ENCODE measurements at regions of chr17 and their contacts with region 1.

Region 1: GRCh38 chr17:9575381-9576101 is at the start of gene STX8:
- DNase-seq: peak; percentile 94
- H3K4me3 ChIP-seq: peak within 1 kb of the TSS; percentile 67 to 75 (median 70)
- H3K27ac ChIP-seq: peak within 1 kb of the TSS; percentile 66 to 73 (median 68)
- H3K4me1 ChIP-seq: peaks cover 0 to 26% (median 18%) of the 10 kb centered on the region in 4 donors
- H3K27me3 ChIP-seq: no peaks in the 10 kb centered on the region
- CTCF ChIP-seq: no peak
- EP300 ChIP-seq: peak in 1 of 4 donors; percentile 29
- POLR2A ChIP-seq: peak in 1 of 2 donors; percentile 14
- total RNA-seq, gene STX8: 56.6 to 104 (median 83.4) TPM

Region 2: GRCh38 chr17:9636501-9636900 is 61.0 kb after region 1 on chr17:
- intact Hi-C with region 1: no loop called
- DNase-seq: no peak
- H3K4me3 ChIP-seq: no peak overlapping the region
- H3K27ac ChIP-seq: no peak overlapping the region
- H3K4me1 ChIP-seq: no peaks in the 10 kb centered on the region
- H3K27me3 ChIP-seq: peaks cover 0 to 6% (median 0%) of the 10 kb centered on the region in 3 donors
- CTCF ChIP-seq: no peak
- EP300 ChIP-seq: no peak
- POLR2A ChIP-seq: no peak

Region 3: DNA sequence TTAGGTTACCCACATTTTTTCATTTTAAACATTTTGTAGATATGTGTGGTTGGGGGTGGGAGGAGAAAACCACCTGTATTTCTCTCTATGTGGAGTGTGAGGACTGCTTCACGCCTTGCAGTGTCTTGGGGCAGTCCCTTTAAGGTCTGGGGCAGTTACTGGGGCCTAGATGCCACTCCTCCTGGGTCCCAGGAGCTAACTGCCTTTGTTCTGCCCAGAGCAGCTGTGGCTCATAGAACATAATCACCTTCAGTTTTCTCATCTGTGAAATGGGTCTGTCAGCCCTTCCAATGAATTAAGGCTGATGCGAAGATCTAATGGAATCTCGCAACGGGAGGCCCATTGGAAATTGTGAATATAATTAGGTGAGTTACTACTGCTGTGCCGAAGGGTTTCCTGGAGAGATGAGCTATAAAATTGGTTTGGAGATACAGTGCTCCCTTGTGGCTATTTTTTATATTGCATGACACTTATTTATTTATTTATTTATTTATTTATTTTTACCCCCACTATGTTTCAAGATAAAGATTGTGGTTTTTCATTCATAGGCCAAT is 192.9 kb after region 1 on chr17:
- intact Hi-C with region 1: loop called (anchors 5 kb)
- DNase-seq: no peak
- H3K4me3 ChIP-seq: no peak overlapping the region
- H3K27ac ChIP-seq: no peak overlapping the region
- H3K4me1 ChIP-seq: no peaks in the 10 kb centered on the region
- H3K27me3 ChIP-seq: no peaks in the 10 kb centered on the region
- CTCF ChIP-seq: peak in 3 of 4 experiments; percentile 17 to 54 (median 42)
- EP300 ChIP-seq: no peak
- POLR2A ChIP-seq: no peak

Measured in sigmoid colon (tissue), 7 donors.